ENCODE measurements at regions of chrX and their contacts with region 1.

Region 1: GRCh38 chrX:131235768-131236545 is 53.1 kb downstream of the IGSF1 start:
- DNase-seq: no peak
- H3K4me3 ChIP-seq: no peak overlapping the region
- H3K27ac ChIP-seq: no peak overlapping the region
- H3K4me1 ChIP-seq: no peaks in the 10 kb centered on the region
- H3K27me3 ChIP-seq: no peaks in the 10 kb centered on the region
- CTCF ChIP-seq: no peak

Region 2: GRCh38 chrX:131187206-131187605 is 48.8 kb before region 1 on chrX:
- CTCF ChIA-PET with region 1: no interaction called
- dilution Hi-C with region 1: no loop called
- in situ Hi-C with region 1: no loop called
- intact Hi-C with region 1: no loop called
- DNase-seq: no peak
- H3K4me3 ChIP-seq: no peak overlapping the region
- H3K27ac ChIP-seq: no peak overlapping the region
- H3K4me1 ChIP-seq: no peaks in the 10 kb centered on the region
- H3K27me3 ChIP-seq: no peaks in the 10 kb centered on the region
- CTCF ChIP-seq: no peak

Region 3: GRCh38 chrX:131288738-131289511 is 53.0 kb after region 1 on chrX and contains the start of gene IGSF1:
- CTCF ChIA-PET with region 1: no interaction called
- dilution Hi-C with region 1: loop called (anchors 10 kb)
- in situ Hi-C with region 1: no loop called
- intact Hi-C with region 1: no loop called
- DNase-seq: no peak
- H3K4me3 ChIP-seq: no peak within 1 kb of the TSS
- H3K27ac ChIP-seq: no peak within 1 kb of the TSS
- H3K4me1 ChIP-seq: no peaks in the 10 kb centered on the region
- H3K27me3 ChIP-seq: peaks cover 2% of the 10 kb centered on the region
- CTCF ChIP-seq: no peak
- total RNA-seq, gene IGSF1: not detected

Region 4: DNA sequence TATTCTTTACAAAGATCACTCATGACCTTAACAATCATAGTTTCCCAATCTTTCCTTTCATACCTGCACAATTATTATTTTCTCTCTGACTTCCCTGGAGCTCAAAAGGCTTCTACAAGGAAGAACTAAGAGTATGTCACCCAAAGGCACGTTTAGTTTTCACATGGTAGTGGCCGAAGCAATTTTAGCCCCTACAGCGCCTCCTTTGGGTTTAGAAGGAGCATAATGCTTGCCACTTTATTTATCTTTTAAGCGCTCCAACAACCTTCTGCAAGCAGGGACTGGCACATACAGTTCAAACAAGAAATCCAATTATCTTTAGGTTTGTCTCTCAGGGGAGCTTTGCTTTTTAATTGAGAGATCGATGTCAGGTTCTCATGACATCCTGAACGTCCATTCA is 95.2 kb after region 1 on chrX:
- CTCF ChIA-PET with region 1: no interaction called
- dilution Hi-C with region 1: no loop called
- in situ Hi-C with region 1: no loop called
- intact Hi-C with region 1: no loop called
- DNase-seq: no peak
- H3K4me3 ChIP-seq: no peak overlapping the region
- H3K27ac ChIP-seq: no peak overlapping the region
- H3K4me1 ChIP-seq: no peaks in the 10 kb centered on the region
- H3K27me3 ChIP-seq: no peaks in the 10 kb centered on the region
- CTCF ChIP-seq: no peak